PC-9 (cell line): ENCODE measurements at regions of chr19 and their contacts with region 1.

Region 1: GRCh38 chr19:55339048-55339888 is at the start of gene KMT5C:
- DNase-seq: peak; percentile 100
- H3K4me3 ChIP-seq: peak within 1 kb of the TSS; percentile 86
- H3K27ac ChIP-seq: peak within 1 kb of the TSS; percentile 97
- H3K4me1 ChIP-seq: peaks cover 14% of the 10 kb centered on the region
- H3K27me3 ChIP-seq: no peaks in the 10 kb centered on the region
- CTCF ChIP-seq: no peak
- total RNA-seq, gene KMT5C: 71.6 and 80.7 TPM in 2 replicates

Region 2: DNA sequence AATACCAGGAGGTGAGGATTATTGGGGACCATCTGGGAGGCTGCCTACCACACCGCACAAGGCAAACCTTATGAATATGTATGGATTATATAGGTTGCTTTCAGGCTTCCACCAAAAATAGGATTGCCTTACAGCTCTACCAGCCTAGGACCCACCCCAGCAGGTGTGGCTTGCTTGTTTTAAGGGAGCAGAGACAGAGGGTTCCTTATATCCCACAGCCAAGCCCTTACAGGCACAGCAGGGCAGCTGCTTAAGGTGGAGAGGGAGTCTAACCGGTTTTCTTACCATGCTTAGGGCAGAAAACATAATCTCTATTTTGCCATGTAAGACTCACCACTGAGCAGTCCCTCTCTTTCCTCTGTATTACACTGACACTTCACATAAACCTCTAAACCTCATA is 940.1 kb before region 1 on chr19:
- CTCF ChIA-PET with region 1: no interaction called
- POLR2A ChIA-PET with region 1: no interaction called
- intact Hi-C with region 1: no loop called
- DNase-seq: peak in 1 of 2 experiments; percentile 80
- H3K4me3 ChIP-seq: no peak overlapping the region
- H3K27ac ChIP-seq: no peak overlapping the region
- H3K4me1 ChIP-seq: peaks cover 12% of the 10 kb centered on the region
- H3K27me3 ChIP-seq: 0 out of 2 replicates have a peak, but pooled peaks cover 3% of the 10 kb centered on the region
- CTCF ChIP-seq: no peak

Region 3: GRCh38 chr19:55117636-55118391 is 221.5 kb before region 1 on chr19 and contains the start of gene PPP1R12C:
- CTCF ChIA-PET with region 1: no interaction called
- POLR2A ChIA-PET with region 1: interaction called, 16 read pairs
- intact Hi-C with region 1: loop called (anchors 1 kb)
- DNase-seq: peak; percentile 98 to 99
- H3K4me3 ChIP-seq: peak within 1 kb of the TSS; percentile 99
- H3K27ac ChIP-seq: peak within 1 kb of the TSS; percentile 47
- H3K4me1 ChIP-seq: peaks cover 22% of the 10 kb centered on the region
- H3K27me3 ChIP-seq: no peaks in the 10 kb centered on the region
- CTCF ChIP-seq: no peak; the same call in 1 of the 2 replicates
- total RNA-seq, gene PPP1R12C: 110 and 114 TPM in 2 replicates

Region 4: DNA sequence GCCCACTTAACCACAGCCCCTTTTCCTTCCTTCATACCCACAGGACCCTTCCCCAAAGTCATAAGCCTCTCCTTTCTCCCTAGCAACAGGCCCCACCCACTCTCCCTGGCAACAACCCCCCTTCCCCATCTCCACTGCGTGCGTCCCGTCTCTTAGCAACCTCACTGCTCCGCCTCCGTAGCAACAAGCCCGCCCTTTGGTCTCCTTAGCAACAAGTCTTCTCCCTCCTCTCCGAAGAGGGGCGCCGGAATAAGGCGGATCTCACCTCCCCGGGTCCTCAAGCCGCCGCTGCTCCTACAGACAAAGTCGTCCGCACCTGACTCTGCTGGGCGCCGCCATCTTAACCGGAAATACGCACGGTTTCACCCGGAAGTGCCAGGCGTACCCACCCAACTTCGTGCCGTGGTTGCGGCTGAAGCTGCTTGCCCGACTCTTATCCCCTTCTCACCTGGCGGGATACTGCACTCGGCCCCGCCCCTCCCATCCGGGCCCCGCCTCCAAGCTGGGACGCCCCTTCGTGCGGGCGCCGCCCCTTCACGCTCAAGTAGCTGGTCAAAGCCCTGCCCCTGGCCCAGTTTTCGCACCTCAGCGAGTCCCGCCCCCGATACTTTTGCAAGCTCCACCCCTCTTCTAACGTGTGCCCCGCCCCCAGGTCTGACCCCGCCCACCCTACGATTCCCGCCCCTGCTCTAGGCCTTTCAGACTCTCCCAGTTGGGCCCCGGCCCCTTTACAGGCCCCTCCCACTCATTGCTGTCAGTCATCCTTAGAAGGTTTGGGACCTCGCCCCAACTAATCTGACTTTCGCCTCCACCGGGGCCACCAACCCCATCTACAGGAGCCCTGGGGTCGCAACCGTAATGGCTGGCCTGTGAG is 59.3 kb before region 1 on chr19 and contains the start of gene HSPBP1:
- CTCF ChIA-PET with region 1: interaction called, 5 read pairs
- POLR2A ChIA-PET with region 1: interaction called, 24 read pairs
- intact Hi-C with region 1: no loop called
- DNase-seq: peak; percentile 94 to 100
- H3K4me3 ChIP-seq: peak within 1 kb of the TSS; percentile 94
- H3K27ac ChIP-seq: peak within 1 kb of the TSS; percentile 72
- H3K4me1 ChIP-seq: peaks cover 8% of the 10 kb centered on the region; the same call in 1 of the 2 replicates
- H3K27me3 ChIP-seq: peaks cover 4% of the 10 kb centered on the region; the same call in 1 of the 2 replicates
- CTCF ChIP-seq: no peak
- total RNA-seq, gene HSPBP1: 66.2 and 79.6 TPM in 2 replicates

Region 5: GRCh38 chr19:55325172-55325571 is 14.1 kb before region 1 on chr19 and contains the start of gene TMEM150B:
- CTCF ChIA-PET with region 1: no interaction called
- POLR2A ChIA-PET with region 1: interaction called, 28 read pairs
- intact Hi-C with region 1: no loop called
- DNase-seq: no peak
- H3K4me3 ChIP-seq: no peak within 1 kb of the TSS
- H3K27ac ChIP-seq: no peak within 1 kb of the TSS
- H3K4me1 ChIP-seq: peaks cover 19% of the 10 kb centered on the region
- H3K27me3 ChIP-seq: no peaks in the 10 kb centered on the region
- CTCF ChIP-seq: no peak
- total RNA-seq, gene TMEM150B: not detected in 2 replicates

Region 6: GRCh38 chr19:55369671-55370304 is 30.5 kb after region 1 on chr19:
- CTCF ChIA-PET with region 1: no interaction called
- POLR2A ChIA-PET with region 1: interaction called, 15 read pairs
- intact Hi-C with region 1: loop called (anchors 2 kb)
- DNase-seq: peak in 1 of 2 experiments; percentile 60
- H3K4me3 ChIP-seq: peak overlapping the region; percentile 62
- H3K27ac ChIP-seq: no peak overlapping the region
- H3K4me1 ChIP-seq: peaks cover 42% of the 10 kb centered on the region
- H3K27me3 ChIP-seq: peaks cover 5% of the 10 kb centered on the region; the same call in 1 of the 2 replicates
- CTCF ChIP-seq: no peak

Region 7: GRCh38 chr19:55407800-55408532 is 68.7 kb after region 1 on chr19:
- CTCF ChIA-PET with region 1: no interaction called
- POLR2A ChIA-PET with region 1: interaction called, 7 read pairs
- intact Hi-C with region 1: loop called (anchors 2 kb)
- DNase-seq: peak; percentile 95 to 98
- H3K4me3 ChIP-seq: peak overlapping the region; percentile 63
- H3K27ac ChIP-seq: peak overlapping the region; percentile 86
- H3K4me1 ChIP-seq: peaks cover 21% of the 10 kb centered on the region
- H3K27me3 ChIP-seq: no peaks in the 10 kb centered on the region
- CTCF ChIP-seq: no peak